Breast epithelium (tissue), 4 donors: ENCODE measurements at regions of chr16 and their contacts with region 1.

Region 1: GRCh38 chr16:1413684-1414531 is 596 bp downstream of the UNKL start:
- DNase-seq: peak in 1 of 2 donors; percentile 65
- H3K4me3 ChIP-seq: peak overlapping the region; percentile 81 to 99 (median 90)
- H3K27ac ChIP-seq: peak overlapping the region; percentile 88 to 96
- H3K4me1 ChIP-seq: peaks cover under 1 to 5% of the 10 kb centered on the region in 2 donors
- H3K27me3 ChIP-seq: no peaks in the 10 kb centered on the region
- CTCF ChIP-seq: peak in 2 of 3 donors; percentile 42 to 44
- POLR2A ChIP-seq: no peak

Region 2: GRCh38 chr16:352547-353403 is 1061.1 kb before region 1 on chr16 and contains the start of gene AXIN1:
- intact Hi-C with region 1: no loop called
- DNase-seq: peak; percentile 100
- H3K4me3 ChIP-seq: peak within 1 kb of the TSS; percentile 70 to 96 (median 77)
- H3K27ac ChIP-seq: peak within 1 kb of the TSS; percentile 42 to 79
- H3K4me1 ChIP-seq: peaks cover 0 to 5% of the 10 kb centered on the region in 2 donors
- H3K27me3 ChIP-seq: no peaks in the 10 kb centered on the region
- CTCF ChIP-seq: peak in 1 of 3 donors; percentile 40
- POLR2A ChIP-seq: no peak
- total RNA-seq, gene AXIN1: 16.5 to 22.6 (median 22.4) TPM

Region 3: GRCh38 chr16:1308977-1309885 is 104.7 kb before region 1 on chr16 and contains the start of gene UBE2I:
- intact Hi-C with region 1: loop called (anchors 10 kb)
- DNase-seq: peak; percentile 96 to 98
- H3K4me3 ChIP-seq: peak within 1 kb of the TSS; percentile 75 to 88 (median 78)
- H3K27ac ChIP-seq: peak within 1 kb of the TSS; percentile 97
- H3K4me1 ChIP-seq: peaks cover 18% of the 10 kb centered on the region in 2 donors
- H3K27me3 ChIP-seq: no peaks in the 10 kb centered on the region
- CTCF ChIP-seq: no peak
- POLR2A ChIP-seq: no peak
- total RNA-seq, gene UBE2I: 52.5 to 67.8 (median 62.2) TPM

Region 4: GRCh38 chr16:1533443-1533951 is 119.6 kb after region 1 on chr16 and contains the start of gene TMEM204:
- intact Hi-C with region 1: loop called (anchors 10 kb)
- DNase-seq: peak in 1 of 2 donors; percentile 57
- H3K4me3 ChIP-seq: peak within 1 kb of the TSS; percentile 68 to 91 (median 72)
- H3K27ac ChIP-seq: peak within 1 kb of the TSS; percentile 84 to 97
- H3K4me1 ChIP-seq: peaks cover 17 to 24% of the 10 kb centered on the region in 2 donors
- H3K27me3 ChIP-seq: no peaks in the 10 kb centered on the region
- CTCF ChIP-seq: no peak
- POLR2A ChIP-seq: no peak
- total RNA-seq, gene TMEM204: 27.8 to 37.0 (median 34.1) TPM